Ascending aorta (tissue), 2 donors: ENCODE measurements at regions of chr5 and their contacts with region 1.

Region 1: GRCh38 chr5:103562453-103563157 is at the start of gene NUDT12:
- DNase-seq: peak; percentile 8 to 81
- H3K4me3 ChIP-seq: peak within 1 kb of the TSS; percentile 66 to 75
- H3K27ac ChIP-seq: peak within 1 kb of the TSS; percentile 77 to 93
- H3K4me1 ChIP-seq: no peaks in the 10 kb centered on the region
- H3K27me3 ChIP-seq: no peaks in the 10 kb centered on the region
- CTCF ChIP-seq: no peak
- total RNA-seq, gene NUDT12: 6.3 TPM

Region 2: DNA sequence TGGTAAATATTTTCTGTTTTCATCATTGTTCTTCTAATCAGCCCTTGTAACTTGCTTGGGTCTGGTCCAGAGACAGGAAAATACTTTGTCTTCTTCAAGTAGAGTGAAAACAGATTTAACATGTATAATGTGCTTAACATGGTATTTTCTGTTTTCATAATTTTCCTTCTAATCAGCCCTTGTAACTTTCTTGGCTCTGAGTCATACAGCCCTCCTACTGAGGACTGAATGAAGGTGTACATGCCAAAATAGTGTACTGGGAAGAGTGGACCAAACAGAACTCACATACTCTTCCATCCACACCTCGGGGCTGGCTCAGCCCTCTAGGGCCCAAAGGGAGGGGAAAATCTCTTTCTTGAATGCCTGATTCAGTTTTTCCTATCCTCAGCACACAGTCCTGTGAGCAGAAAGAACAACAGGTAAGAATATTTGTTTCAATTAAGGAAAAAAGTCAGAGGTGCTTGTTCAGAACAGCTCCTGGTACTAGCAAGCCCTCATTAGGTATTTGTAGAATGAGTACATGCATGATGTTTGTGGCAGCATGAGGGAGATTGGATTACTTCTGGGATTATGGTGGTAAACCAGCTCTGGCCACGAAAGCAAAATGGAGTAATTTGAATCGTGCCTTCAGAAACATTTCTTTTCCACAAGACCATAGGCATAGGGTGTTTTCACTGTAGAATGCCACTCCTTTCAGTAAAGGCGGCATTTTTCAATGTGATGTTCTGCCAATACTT is 328.2 kb before region 1 on chr5:
- intact Hi-C with region 1: no loop called
- DNase-seq: no peak
- H3K4me3 ChIP-seq: no peak overlapping the region
- H3K27ac ChIP-seq: peak overlapping the region in 1 of 2 donors; percentile 58
- H3K4me1 ChIP-seq: peaks cover 0 to 6% of the 10 kb centered on the region in 2 donors
- H3K27me3 ChIP-seq: no peaks in the 10 kb centered on the region
- CTCF ChIP-seq: no peak

Region 3: GRCh38 chr5:103258368-103258956 is 304.1 kb before region 1 on chr5 and contains the start of gene MACIR:
- intact Hi-C with region 1: loop called (anchors 5 kb)
- DNase-seq: peak; percentile 86 to 98
- H3K4me3 ChIP-seq: peak within 1 kb of the TSS; percentile 77 to 89
- H3K27ac ChIP-seq: peak within 1 kb of the TSS; percentile 73 to 79
- H3K4me1 ChIP-seq: peaks cover 0 to 23% of the 10 kb centered on the region in 2 donors
- H3K27me3 ChIP-seq: no peaks in the 10 kb centered on the region
- CTCF ChIP-seq: no peak
- total RNA-seq, gene MACIR: 0.53 TPM

Region 4: DNA sequence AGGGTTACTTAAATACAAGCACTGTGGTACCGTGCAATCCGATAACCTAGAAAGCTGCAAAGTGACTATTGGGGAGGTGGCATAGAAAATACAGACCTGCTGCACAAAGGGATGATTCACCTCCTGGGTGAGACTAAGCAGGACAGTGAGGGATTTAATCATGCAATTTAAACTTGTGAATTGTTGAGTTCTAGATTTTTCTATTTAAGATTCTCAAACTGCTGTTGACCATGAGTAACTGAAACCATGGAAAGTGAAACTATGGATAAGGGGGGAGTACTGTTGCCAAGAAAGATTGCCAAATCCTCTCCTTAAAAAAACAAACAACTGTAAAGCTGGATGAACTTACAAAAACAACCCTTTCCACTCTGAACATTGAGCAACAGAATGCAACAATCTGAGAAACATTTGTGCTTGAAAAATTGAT is 61.4 kb after region 1 on chr5:
- intact Hi-C with region 1: no loop called
- DNase-seq: no peak
- H3K4me3 ChIP-seq: no peak overlapping the region
- H3K27ac ChIP-seq: no peak overlapping the region
- H3K4me1 ChIP-seq: no peaks in the 10 kb centered on the region
- H3K27me3 ChIP-seq: no peaks in the 10 kb centered on the region
- CTCF ChIP-seq: no peak